Activated CD8-positive, alpha-beta T cell treated with anti-CD3 and anti-CD28 coated beads for 36 hours (primary cell): ENCODE measurements at regions of chr5 and their contacts with region 1.

Region 1: GRCh38 chr5:134176511-134177368 is at the start of gene SKP1:
- DNase-seq: peak; percentile 86
- ATAC-seq: peak; percentile 87
- H3K4me3 Mint-ChIP-seq: peak within 1 kb of the TSS; percentile 82
- H3K27ac Mint-ChIP-seq: peak within 1 kb of the TSS; percentile 94
- H3K4me1 Mint-ChIP-seq: peaks cover 26% of the 10 kb centered on the region
- H3K27me3 Mint-ChIP-seq: no peaks in the 10 kb centered on the region
- CTCF ChIP-seq: no peak
- total RNA-seq, gene SKP1: 235 to 242 TPM

Region 2: DNA sequence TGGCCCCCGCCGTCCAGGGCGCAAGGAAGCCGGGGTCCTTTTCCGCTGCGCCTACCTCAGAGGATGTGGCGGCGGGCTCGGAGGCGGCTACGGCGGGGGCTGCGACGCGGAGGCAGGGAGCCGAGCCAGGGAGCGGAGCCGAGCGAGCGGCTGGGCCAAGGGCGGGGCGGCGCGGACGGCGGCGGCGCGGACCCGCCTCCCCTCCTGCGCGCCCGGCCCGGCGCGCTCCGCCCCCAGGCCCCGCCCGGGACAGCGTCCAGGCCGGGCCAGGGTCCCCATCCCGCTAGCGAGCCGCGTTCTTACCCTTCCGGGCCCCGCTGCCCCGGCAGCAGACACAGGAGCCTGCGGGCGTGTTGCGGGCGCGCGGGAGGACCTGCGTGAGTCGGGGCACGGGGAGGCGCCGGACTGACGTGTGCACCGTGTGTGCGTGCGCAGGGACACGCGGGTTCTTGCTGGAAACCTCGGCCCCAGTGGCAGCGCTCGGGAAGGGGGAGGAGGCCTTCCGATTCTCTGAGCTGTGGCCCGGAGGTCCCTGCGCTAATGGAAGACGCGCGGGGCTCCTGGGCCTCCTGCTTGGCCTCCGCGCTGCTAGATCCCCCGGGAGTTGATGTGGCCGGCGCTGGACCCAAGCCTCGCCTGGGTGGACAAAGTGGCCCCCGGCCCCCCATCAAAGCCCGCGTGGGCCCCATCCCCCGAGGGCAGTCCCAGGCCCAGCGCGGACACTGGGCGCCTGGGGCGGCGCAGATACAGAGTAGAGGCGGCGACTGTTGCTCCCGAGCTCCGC is 172.0 kb before region 1 on chr5 and contains the start of gene VDAC1:
- CTCF ChIA-PET with region 1: no interaction called
- POLR2A ChIA-PET with region 1: interaction called, 23 read pairs
- intact Hi-C with region 1: no loop called
- DNase-seq: peak; percentile 89
- ATAC-seq: peak; percentile 85
- H3K4me3 Mint-ChIP-seq: peak within 1 kb of the TSS; percentile 95
- H3K27ac Mint-ChIP-seq: peak within 1 kb of the TSS; percentile 99
- H3K4me1 Mint-ChIP-seq: peaks cover 39% of the 10 kb centered on the region
- H3K27me3 Mint-ChIP-seq: no peaks in the 10 kb centered on the region
- CTCF ChIP-seq: no peak
- total RNA-seq, gene VDAC1: 481 to 484 TPM

Region 3: DNA sequence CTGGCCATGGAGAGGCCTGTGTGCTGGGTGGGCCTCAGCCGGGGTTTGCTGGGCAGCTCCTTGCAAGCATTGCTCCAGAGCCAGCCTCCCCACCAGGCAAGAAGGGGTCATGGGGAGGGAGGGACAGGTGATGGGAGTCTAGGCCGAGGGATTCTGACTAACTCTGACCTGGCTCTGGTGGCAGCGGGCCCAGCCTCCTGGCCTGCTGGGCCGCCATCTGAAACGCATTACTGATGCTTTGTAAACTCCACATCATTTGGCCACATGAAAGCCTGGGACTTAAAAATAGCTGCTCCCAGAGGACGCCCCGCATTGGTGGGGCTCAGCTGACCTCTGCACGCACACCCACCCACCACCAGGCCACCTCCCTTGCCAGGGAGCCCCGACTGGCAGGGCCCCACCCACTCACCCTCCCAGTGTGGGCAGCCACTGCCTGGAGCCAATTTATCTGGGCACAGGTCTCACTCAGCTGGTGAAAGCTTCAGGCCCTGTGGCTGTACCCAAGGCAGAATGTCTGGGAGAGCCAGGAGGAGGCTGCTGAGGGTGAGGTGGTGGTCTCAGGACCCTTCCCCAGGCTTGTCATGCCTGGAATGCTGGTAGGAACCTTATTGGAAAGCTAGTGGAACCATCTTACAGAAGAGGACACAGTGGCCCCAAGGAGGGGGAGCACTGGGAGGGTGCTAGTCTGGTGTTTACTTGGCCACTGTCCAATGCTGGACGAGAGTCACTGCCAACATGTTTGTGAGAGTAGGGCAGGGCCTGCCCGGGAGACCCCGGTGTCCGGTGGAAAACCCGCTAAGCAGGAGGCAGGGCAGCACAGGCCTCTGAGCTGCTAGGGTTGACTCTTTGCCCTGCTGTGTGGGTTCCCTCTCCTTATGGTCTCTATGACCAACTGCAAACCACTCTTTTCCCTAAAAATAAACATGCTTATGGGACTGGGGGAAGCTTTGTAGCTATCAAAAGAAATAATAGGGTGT is 51.4 kb before region 1 on chr5:
- CTCF ChIA-PET with region 1: no interaction called
- POLR2A ChIA-PET with region 1: interaction called, 11 read pairs
- intact Hi-C with region 1: no loop called
- DNase-seq: peak; percentile 59
- ATAC-seq: peak; percentile 2
- H3K4me3 Mint-ChIP-seq: peak overlapping the region; percentile 65
- H3K27ac Mint-ChIP-seq: peak overlapping the region; percentile 82
- H3K4me1 Mint-ChIP-seq: peaks cover 97% of the 10 kb centered on the region
- H3K27me3 Mint-ChIP-seq: no peaks in the 10 kb centered on the region
- CTCF ChIP-seq: no peak

Region 4: GRCh38 chr5:134153657-134154056 is 23.1 kb before region 1 on chr5:
- CTCF ChIA-PET with region 1: interaction called, 3 read pairs
- POLR2A ChIA-PET with region 1: interaction called, 42 read pairs
- intact Hi-C with region 1: no loop called
- DNase-seq: no peak
- ATAC-seq: no peak
- H3K4me3 Mint-ChIP-seq: no peak overlapping the region
- H3K27ac Mint-ChIP-seq: peak overlapping the region; percentile 4
- H3K4me1 Mint-ChIP-seq: peaks cover 72% of the 10 kb centered on the region
- H3K27me3 Mint-ChIP-seq: no peaks in the 10 kb centered on the region
- CTCF ChIP-seq: no peak

Region 5: GRCh38 chr5:134209477-134210240 is 32.9 kb after region 1 on chr5:
- CTCF ChIA-PET with region 1: no interaction called
- POLR2A ChIA-PET with region 1: interaction called, 11 read pairs
- intact Hi-C with region 1: no loop called
- DNase-seq: no peak
- ATAC-seq: no peak
- H3K4me3 Mint-ChIP-seq: no peak overlapping the region
- H3K27ac Mint-ChIP-seq: peak overlapping the region; percentile 9
- H3K4me1 Mint-ChIP-seq: peaks cover 53% of the 10 kb centered on the region
- H3K27me3 Mint-ChIP-seq: no peaks in the 10 kb centered on the region
- CTCF ChIP-seq: no peak